HepG2 (cell line): ENCODE measurements at regions of chr20 and their contacts with region 1.

Region 1: GRCh38 chr20:5126512-5127203 is at the start of gene CDS2:
- DNase-seq: peak; percentile 99
- ATAC-seq: peak; percentile 94
- H3K4me3 ChIP-seq: peak within 1 kb of the TSS; percentile 62 to 96 (median 75)
- H3K27ac ChIP-seq: peak within 1 kb of the TSS; percentile 76
- H3K4me1 ChIP-seq: peaks cover 34% of the 10 kb centered on the region
- H3K27me3 ChIP-seq: no peaks in the 10 kb centered on the region; a peak in 1 of 5 replicates
- CTCF ChIP-seq: peak; percentile 92
- EP300 ChIP-seq: peak; percentile 35 to 90; a peak in 3 of 4 replicates
- POLR2A ChIP-seq: peak; percentile 73 to 75
- RAD21 ChIP-seq: peak; percentile 99
- total RNA-seq, gene CDS2: 69.6 and 81.3 TPM in 2 replicates

Region 2: GRCh38 chr20:4937397-4938319 is 189.0 kb before region 1 on chr20:
- CTCF ChIA-PET with region 1: no interaction called
- POLR2A ChIA-PET with region 1: no interaction called
- in situ Hi-C with region 1: no loop called
- intact Hi-C with region 1: no loop called
- DNase-seq: peak; percentile 74
- ATAC-seq: peak; percentile 90
- H3K4me3 ChIP-seq: peak overlapping the region in 2 of 3 experiments; percentile 2 to 33; a peak in 2 of 6 replicates
- H3K27ac ChIP-seq: peak overlapping the region; percentile 79
- H3K4me1 ChIP-seq: peaks cover 31% of the 10 kb centered on the region
- H3K27me3 ChIP-seq: no peaks in the 10 kb centered on the region
- CTCF ChIP-seq: no peak
- EP300 ChIP-seq: no peak; a peak in 1 of 4 replicates
- POLR2A ChIP-seq: no peak; a peak in 1 of 4 replicates
- RAD21 ChIP-seq: no peak

Region 3: DNA sequence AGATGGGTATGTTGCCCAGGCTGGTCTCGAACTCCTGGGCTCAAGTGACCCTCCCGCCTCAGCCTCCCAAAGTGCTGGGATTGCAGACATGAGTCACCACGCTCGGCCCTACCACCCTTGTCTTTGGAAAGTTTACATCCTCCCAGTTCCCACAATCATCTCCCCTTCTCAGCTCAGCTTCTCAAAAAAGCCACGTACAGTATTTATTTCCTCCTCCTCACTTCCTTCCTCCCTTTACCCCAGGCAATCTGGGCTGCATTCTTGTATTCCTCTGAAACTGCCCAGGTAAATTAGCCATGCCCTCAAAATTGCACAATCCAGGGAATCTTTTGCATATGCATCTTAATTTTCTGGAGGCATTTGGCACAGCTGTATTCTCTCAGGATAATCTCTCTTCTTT is 117.9 kb before region 1 on chr20:
- CTCF ChIA-PET with region 1: no interaction called
- POLR2A ChIA-PET with region 1: no interaction called
- in situ Hi-C with region 1: no loop called
- intact Hi-C with region 1: no loop called
- DNase-seq: no peak
- ATAC-seq: no peak
- H3K4me3 ChIP-seq: no peak overlapping the region
- H3K27ac ChIP-seq: no peak overlapping the region
- H3K4me1 ChIP-seq: peaks cover 53% of the 10 kb centered on the region
- H3K27me3 ChIP-seq: no peaks in the 10 kb centered on the region; a peak in 1 of 5 replicates
- CTCF ChIP-seq: no peak
- EP300 ChIP-seq: no peak
- POLR2A ChIP-seq: no peak
- RAD21 ChIP-seq: no peak

Region 4: GRCh38 chr20:5109276-5109675 is 17.4 kb before region 1 on chr20:
- CTCF ChIA-PET with region 1: no interaction called
- POLR2A ChIA-PET with region 1: no interaction called
- in situ Hi-C with region 1: no loop called
- intact Hi-C with region 1: no loop called
- DNase-seq: no peak
- ATAC-seq: no peak
- H3K4me3 ChIP-seq: no peak overlapping the region
- H3K27ac ChIP-seq: no peak overlapping the region
- H3K4me1 ChIP-seq: peaks cover 19% of the 10 kb centered on the region
- H3K27me3 ChIP-seq: peaks cover 0 to 4% of the 10 kb centered on the region in 2 experiments; a peak in 1 of 5 replicates
- CTCF ChIP-seq: no peak
- EP300 ChIP-seq: no peak
- POLR2A ChIP-seq: no peak
- RAD21 ChIP-seq: no peak

Region 5: DNA sequence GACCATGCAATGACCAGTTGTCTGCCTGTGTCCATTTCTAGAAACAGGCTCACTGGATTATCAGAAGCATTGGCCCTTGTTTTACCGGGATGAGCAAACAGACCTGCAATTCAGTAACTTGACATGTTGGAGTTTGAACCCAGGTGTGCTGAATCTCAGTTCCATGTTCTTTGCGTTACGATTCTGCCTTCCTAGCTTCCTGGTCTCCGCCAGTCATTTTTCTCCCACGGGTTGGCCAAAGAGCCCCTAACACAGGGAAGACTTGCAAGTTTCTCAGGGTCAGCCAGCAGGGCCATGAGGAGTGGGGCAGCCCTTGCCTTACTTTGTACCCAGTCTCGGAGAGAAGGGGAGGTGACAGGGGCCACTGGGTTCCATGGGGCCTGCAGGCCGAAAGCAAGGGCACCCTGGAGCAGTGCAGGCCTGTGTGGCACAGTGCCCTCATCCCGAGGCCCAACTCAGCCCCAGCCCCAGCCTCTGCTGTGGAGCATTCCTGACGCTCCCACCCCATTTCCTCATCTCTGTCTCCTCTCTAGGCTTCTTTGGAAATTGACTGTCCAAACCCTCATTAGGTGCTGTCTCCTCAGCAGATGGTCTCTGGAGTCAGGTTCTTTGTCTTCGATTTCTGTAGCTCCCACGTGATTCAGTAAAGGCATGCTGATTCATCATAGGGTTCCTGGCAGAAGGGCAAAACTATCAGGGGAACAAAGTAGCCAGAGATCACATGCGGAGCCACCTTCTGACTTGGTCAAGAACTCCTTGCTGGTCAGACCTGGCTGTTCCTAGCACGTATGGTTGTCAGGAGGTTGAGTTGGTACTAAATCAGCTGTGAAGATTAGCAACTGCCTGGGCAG is 23.8 kb after region 1 on chr20:
- CTCF ChIA-PET with region 1: no interaction called
- POLR2A ChIA-PET with region 1: interaction called, 176 read pairs
- in situ Hi-C with region 1: no loop called
- intact Hi-C with region 1: loop called (anchors 1 kb)
- DNase-seq: peak; percentile 96
- ATAC-seq: peak; percentile 75
- H3K4me3 ChIP-seq: peak overlapping the region; percentile 21 to 47 (median 21); a peak in 5 of 6 replicates
- H3K27ac ChIP-seq: peak overlapping the region; percentile 87
- H3K4me1 ChIP-seq: peaks cover 100% of the 10 kb centered on the region
- H3K27me3 ChIP-seq: no peaks in the 10 kb centered on the region
- CTCF ChIP-seq: no peak
- EP300 ChIP-seq: peak; percentile 46 to 71; a peak in 3 of 4 replicates
- POLR2A ChIP-seq: peak; percentile 57 to 77; a peak in 3 of 4 replicates
- RAD21 ChIP-seq: no peak; the same call in 1 of the 2 replicates

Region 6: DNA sequence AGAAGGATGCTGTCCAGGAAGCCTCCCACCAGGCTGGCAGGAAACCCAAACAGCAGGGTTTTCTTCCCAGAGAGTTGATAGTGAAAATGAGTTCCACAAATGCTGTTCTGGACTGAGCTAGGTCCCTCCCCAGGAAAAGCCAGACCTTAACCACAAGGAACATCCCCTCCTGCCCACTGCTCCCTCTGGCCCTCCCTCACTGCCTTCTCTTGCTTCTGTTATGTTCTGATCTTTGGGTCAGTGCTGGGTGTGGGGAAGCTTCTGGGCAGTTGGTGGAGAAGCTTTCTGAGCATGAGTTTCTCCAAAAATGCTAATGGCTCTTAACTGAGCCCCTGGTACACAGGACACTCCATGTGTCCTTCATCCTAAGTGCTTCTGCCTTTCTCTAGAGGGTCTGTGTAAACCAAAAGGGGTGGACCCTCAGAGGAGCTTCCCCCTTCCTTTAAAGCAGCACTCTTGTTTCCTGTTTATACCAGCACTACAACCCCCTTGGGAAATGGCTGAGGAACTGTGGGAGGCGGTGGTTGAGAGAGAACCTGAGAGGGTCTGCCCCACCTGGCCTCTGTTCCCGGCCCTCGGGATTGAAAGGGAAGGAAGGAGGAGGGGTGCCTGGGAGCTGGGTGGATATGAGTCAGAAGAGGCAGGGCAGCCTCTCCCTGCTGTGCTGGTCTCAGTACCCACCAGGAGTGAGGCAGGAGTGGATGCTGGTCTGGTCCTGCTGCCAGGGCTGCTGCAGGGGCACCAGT is 42.2 kb after region 1 on chr20:
- CTCF ChIA-PET with region 1: no interaction called
- POLR2A ChIA-PET with region 1: interaction called, 7 read pairs
- in situ Hi-C with region 1: no loop called
- intact Hi-C with region 1: loop called (anchors 5 kb)
- DNase-seq: no peak
- ATAC-seq: no peak
- H3K4me3 ChIP-seq: no peak overlapping the region
- H3K27ac ChIP-seq: no peak overlapping the region
- H3K4me1 ChIP-seq: peaks cover 55% of the 10 kb centered on the region
- H3K27me3 ChIP-seq: no peaks in the 10 kb centered on the region
- CTCF ChIP-seq: no peak
- EP300 ChIP-seq: no peak
- POLR2A ChIP-seq: no peak
- RAD21 ChIP-seq: no peak

Region 7: DNA sequence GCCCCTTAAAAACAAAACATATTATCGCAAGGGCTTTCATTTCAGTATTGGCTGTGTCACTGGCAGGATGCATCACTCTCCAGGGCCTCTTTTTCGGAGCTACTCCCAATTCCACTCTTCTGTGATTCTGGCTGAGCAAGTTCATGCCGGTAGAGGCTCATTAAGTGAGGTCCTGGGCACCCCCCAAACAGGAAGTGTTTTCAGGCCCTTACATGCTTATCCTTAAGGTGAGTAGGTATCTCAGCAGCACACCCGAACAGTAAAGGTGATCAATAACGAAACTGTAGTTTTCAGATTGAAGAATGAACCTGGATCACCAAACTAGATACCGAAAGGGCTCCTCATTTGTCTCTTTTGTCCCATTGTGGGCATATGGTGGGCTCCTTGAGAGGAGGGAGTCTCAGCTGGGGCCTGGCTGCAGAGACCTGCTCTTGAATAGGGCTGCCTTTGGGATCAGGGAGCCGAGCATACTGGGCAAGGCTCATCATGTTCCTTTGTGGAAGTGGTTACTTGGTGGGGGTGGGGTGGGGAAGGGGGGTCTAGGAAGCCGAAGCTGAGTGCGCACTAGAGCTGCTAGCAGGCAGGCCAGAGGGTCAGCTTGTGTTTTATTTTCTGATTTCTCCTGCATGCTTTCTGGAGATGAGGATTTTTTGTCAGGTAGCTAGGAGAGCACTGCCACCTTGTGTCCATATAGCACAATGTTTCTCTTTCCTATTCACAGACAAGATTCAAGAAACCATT is 65.3 kb after region 1 on chr20:
- CTCF ChIA-PET with region 1: interaction called, 97 read pairs
- POLR2A ChIA-PET with region 1: interaction called, 73 read pairs
- in situ Hi-C with region 1: loop called (anchors 5 kb)
- intact Hi-C with region 1: loop called (anchors 1 kb)
- DNase-seq: peak; percentile 90
- ATAC-seq: peak; percentile 75
- H3K4me3 ChIP-seq: no peak overlapping the region
- H3K27ac ChIP-seq: no peak overlapping the region
- H3K4me1 ChIP-seq: peaks cover 11% of the 10 kb centered on the region; the same call in 1 of the 2 replicates
- H3K27me3 ChIP-seq: no peaks in the 10 kb centered on the region
- CTCF ChIP-seq: peak; percentile 95
- EP300 ChIP-seq: no peak
- POLR2A ChIP-seq: no peak
- RAD21 ChIP-seq: peak; percentile 98

Region 8: DNA sequence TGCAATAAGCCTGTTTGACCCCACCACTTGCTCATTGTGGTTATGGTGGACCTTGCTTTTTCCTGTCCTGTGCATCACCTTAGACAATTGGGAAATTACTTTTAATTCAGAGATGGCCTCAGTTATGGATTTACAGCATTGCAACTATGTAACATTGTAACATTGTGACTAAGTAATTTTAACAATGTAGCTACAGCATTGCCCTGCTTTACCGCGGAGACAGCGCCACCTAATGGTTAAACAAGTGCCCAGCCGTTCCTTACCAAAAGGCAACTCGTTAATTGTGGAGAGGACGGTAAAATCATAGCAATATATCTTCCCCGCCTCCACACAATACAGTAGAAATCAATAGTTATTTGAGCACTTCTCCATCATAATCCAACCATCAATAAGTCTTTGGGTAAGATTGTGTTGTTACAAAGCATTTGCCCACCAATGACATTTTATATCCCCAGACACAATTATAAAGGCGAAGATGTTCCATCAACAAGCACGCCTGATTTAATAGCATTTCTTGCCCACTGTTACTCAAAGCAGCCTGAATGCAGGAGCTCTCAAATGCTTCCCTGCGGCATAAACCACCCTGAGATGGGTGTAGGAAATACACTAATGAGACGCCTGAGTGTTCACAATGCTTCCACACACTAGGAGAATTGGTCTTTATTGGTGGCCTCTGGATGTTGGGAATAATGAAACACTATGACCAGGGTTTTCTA is 96.4 kb after region 1 on chr20:
- CTCF ChIA-PET with region 1: no interaction called
- POLR2A ChIA-PET with region 1: no interaction called
- in situ Hi-C with region 1: no loop called
- intact Hi-C with region 1: loop called (anchors 1 kb)
- DNase-seq: peak; percentile 67
- ATAC-seq: peak; percentile 75
- H3K4me3 ChIP-seq: no peak overlapping the region
- H3K27ac ChIP-seq: no peak overlapping the region
- H3K4me1 ChIP-seq: peaks cover 17% of the 10 kb centered on the region
- H3K27me3 ChIP-seq: no peaks in the 10 kb centered on the region
- CTCF ChIP-seq: peak; percentile 98
- EP300 ChIP-seq: no peak
- POLR2A ChIP-seq: no peak
- RAD21 ChIP-seq: peak; percentile 95